ENCODE measurements at regions of chr13 and their contacts with region 1.

Region 1: GRCh38 chr13:43081866-43082265 is 58.5 kb downstream of the DNAJC15 start:
- DNase-seq: no peak

Region 2: DNA sequence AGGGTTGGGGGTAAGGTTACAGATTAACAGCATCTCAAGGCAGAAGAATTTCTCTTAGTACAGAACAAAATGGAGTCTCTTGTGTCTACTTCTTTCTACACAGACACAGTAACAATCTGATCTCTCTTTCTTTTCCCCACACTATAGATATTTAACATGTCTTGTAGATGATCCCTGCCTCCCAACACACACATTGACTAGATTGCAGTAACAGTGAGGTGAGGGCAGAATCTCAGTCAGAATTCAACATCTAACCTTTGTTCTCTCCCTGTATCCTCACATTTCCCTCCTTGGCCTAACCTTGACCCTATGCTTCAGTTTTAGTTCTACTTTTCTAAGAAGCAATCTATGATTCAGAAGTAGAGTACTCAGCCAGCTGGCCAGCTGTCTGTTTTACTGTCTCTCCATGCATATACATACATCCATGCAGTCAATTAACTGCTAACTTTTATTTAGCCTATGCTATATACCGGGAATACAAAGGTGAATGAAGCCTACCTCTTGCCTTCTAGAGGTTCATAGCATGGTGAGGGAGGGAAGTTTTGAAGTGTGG is 40.4 kb before region 1 on chr13:
- in situ Hi-C with region 1: loop called (anchors 5 kb)
- DNase-seq: no peak

Measured in G401 (cell line).